Ovary (tissue), 10 donors: ENCODE measurements at regions of chr2 and their contacts with region 1.

Region 1: DNA sequence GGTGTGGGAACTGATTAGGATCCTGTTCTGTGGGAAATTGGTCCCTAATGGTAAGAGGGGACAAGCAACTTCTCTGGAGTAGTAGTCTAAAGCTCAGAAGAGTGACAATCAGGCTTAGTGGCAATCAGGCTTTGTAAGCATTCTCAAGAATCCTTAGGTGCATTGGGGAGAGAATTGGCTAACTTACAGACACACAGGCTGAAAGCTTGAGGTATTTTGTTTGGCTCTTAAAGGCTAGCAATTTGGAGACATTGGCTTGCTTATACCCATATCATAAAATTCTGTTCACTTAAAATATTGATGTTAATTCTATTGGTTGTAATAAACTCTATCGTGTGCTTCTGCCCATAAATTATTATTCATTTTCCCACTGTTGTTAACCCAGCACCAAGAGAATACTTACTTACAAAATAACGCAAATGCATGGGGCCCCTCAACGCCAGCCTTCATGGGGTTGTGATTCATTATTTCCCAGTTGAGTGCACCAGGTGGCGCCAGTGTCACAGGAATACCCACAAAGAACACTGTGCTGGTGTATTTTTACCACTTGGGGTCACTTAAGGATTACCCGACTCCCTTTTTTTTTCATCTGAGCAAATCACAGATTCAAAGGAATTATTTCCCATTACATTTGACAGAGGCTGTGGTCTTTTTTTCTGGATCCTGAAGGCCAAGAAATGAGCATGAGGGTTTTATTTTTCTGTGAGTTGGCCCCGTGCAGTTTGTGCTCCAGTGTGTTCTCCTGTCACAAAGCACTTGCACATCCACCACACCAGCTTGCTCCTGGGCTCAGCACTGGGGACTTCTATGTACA is 45.5 kb downstream of the DDX1 start:
- DNase-seq: peak; percentile 67 to 86 (median 83)
- H3K4me3 ChIP-seq: no peak overlapping the region
- H3K27ac ChIP-seq: no peak overlapping the region
- H3K4me1 ChIP-seq: peaks cover 15% of the 10 kb centered on the region
- H3K27me3 ChIP-seq: no peaks in the 10 kb centered on the region
- CTCF ChIP-seq: peak; percentile 63 to 96 (median 96)
- EP300 ChIP-seq: no peak
- POLR2A ChIP-seq: no peak

Region 2: GRCh38 chr2:15599994-15600393 is 37.2 kb before region 1 on chr2:
- intact Hi-C with region 1: no loop called
- DNase-seq: no peak
- H3K4me3 ChIP-seq: no peak overlapping the region
- H3K27ac ChIP-seq: no peak overlapping the region
- H3K4me1 ChIP-seq: no peaks in the 10 kb centered on the region
- H3K27me3 ChIP-seq: no peaks in the 10 kb centered on the region
- CTCF ChIP-seq: no peak
- EP300 ChIP-seq: no peak
- POLR2A ChIP-seq: no peak

Region 3: DNA sequence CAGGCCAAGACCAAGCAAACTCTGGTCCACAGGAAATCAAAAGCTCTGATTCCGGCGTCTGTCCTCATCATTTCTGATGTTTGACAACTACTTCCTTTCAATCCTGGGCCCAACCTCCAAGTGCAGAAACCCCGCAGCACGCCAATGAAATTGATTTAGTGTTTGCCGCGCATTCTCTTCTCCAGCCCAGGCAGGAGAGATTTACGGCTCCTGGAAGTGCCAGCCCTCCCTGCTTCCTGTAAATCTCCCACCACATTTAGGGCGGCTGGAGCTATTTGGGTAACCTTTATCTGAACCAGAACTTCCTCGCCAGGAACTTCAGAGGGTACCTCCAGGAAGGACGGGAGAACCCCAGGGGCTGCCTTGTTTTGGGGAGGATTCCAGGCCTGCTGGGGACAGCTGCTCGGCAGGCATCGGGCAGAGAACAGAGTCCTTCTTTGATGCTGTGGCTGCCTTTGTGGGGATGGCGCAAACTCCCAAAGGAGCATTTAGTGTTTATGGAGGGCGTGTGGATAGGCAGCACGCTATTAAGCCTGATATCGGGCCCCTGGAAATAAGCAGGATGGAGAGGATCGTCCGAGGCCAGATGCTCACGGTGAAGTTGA is 181.1 kb after region 1 on chr2:
- intact Hi-C with region 1: loop called in 1 of 4 experiments (anchors 10 kb)
- DNase-seq: no peak
- H3K4me3 ChIP-seq: no peak overlapping the region
- H3K27ac ChIP-seq: no peak overlapping the region
- H3K4me1 ChIP-seq: peaks cover 18% of the 10 kb centered on the region
- H3K27me3 ChIP-seq: no peaks in the 10 kb centered on the region
- CTCF ChIP-seq: no peak
- EP300 ChIP-seq: no peak
- POLR2A ChIP-seq: no peak

Region 4: GRCh38 chr2:15939854-15940660 is 302.9 kb after region 1 on chr2 and contains the start of gene MYCN:
- intact Hi-C with region 1: loop called in 2 of 4 experiments (anchors 5 kb)
- DNase-seq: peak; percentile 52 to 72 (median 56)
- H3K4me3 ChIP-seq: peak within 1 kb of the TSS; percentile 44
- H3K27ac ChIP-seq: no peak within 1 kb of the TSS
- H3K4me1 ChIP-seq: no peaks in the 10 kb centered on the region
- H3K27me3 ChIP-seq: no peaks in the 10 kb centered on the region
- CTCF ChIP-seq: peak in 1 of 3 donors; percentile 27
- EP300 ChIP-seq: no peak
- POLR2A ChIP-seq: no peak
- total RNA-seq, gene MYCN: 1.2 to 7.0 (median 2.1) TPM

Region 5: DNA sequence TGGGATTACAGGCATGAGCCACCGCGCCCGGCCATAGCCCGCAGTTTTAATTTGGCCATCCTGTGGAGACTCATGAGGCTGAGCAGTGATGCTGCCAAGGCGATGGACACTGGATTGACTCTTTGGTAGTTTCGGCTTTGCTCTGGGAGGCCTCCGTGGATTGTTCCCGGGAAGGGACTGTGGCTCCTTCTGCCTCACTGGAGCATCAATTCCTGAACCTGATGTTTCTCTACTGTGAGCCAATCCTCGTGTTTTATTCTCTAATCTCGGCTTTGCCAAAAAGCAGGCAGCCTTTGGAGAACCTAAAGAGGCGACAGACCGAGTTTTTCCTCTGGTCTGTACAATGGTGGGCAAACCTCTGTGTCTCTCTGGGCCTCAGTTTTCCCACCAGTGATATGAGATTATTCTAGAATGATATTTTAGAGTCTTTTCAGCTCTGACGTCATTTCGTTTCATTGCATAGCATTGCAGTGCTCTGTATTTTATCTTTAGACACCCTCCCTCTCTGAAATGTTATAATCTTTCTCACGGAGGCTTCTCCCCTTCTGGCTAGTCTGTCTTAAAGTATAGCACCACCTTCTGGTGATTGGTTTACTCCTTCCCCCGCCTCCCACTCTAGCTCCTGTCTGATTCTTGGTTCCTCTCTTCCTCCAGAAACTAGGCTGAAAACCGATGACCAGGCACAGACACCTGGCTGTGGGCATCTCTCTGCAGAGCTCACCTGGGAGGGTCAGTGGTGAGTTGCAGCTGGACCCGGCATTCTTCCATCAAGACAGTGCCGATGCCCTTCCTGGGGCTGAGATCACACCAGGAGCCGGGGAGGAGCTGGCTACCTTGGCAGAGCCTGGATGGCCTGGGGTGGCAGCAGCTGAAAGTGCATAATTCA is 644.5 kb after region 1 on chr2:
- intact Hi-C with region 1: loop called in 1 of 4 experiments (anchors 5 kb)
- DNase-seq: peak in 2 of 5 donors; percentile 13 to 25
- H3K4me3 ChIP-seq: no peak overlapping the region
- H3K27ac ChIP-seq: no peak overlapping the region
- H3K4me1 ChIP-seq: peaks cover 5% of the 10 kb centered on the region
- H3K27me3 ChIP-seq: no peaks in the 10 kb centered on the region
- CTCF ChIP-seq: peak in 1 of 3 donors; percentile 24
- EP300 ChIP-seq: no peak
- POLR2A ChIP-seq: no peak

Region 6: DNA sequence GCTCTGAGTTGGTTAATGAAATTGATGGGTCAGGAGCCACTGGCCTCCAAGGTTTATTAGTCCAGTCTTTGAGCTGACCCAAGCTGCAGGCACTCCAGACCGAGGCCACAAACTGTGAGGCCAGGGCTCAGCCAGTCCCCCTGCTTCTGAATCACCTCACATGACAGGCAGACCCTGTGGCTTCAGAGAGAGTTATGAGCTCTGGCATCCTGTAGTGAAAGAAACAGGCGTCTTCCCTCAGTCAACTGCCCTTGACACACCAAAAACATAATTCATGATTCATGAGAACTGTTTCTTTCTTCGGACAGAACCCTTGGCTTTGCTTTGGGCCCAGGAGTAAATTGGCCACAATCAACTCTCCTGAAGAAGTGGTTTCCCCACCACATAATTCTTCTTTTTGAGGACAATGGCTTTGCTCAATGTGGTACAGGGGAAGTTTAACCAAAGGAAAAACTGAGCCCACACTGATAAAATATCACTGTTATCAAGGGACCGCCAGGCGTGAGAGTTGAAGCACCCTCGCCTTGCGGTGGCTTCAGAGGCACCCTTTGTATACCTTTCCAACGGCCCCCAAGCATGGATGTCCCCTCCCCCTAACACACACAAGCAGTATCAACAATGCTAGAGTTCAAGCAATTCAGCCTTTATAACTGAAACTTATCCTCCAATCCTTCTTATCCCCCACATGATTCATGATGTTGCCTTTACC is 801.6 kb after region 1 on chr2:
- intact Hi-C with region 1: no loop called
- DNase-seq: no peak
- H3K4me3 ChIP-seq: no peak overlapping the region
- H3K27ac ChIP-seq: no peak overlapping the region
- H3K4me1 ChIP-seq: no peaks in the 10 kb centered on the region
- H3K27me3 ChIP-seq: no peaks in the 10 kb centered on the region
- CTCF ChIP-seq: no peak
- EP300 ChIP-seq: no peak
- POLR2A ChIP-seq: no peak

Region 7: DNA sequence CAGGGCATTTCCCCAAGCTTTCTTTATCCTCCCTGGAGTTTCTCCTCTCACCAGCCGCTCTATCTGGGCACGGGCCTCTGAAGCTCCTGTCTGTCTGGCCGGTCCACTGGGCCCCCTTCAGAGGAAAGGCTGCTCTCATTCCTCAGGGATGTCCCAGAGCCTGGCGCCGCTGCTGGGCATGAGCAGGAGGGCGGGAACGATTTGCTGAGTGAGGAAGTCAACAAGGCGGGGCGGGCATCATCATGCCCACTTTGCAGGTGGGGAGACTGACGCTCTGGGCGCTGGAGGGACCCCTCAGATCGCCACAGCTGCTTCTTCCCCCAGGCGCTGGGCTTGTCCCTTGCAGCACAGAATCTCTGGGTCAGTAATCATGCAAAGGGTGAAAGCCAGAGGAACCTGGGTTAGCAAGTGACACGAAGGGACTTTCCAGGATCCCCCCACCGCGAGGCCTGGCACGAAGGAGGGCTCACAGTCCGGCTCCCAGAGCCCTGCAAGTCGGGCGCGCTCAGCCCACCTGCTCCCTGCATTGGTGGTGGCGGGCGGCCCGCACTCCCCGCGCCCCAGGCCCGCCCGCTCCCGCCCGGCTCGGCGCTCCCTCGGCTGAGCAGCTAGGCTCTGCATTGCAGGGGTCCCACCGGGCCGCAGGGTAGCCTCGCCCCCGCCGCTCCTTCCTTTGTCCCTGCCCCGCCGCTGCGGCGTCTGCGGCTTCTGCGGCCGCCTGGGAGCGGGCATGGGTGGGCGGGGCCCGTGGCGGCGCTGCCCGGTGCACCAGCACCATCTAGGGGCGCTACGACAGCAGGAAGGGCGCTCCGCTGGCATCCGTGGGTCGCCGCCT is 870.7 kb after region 1 on chr2:
- intact Hi-C with region 1: loop called in 2 of 4 experiments (anchors 5 to 10 kb)
- DNase-seq: peak; percentile 19 to 67 (median 42)
- H3K4me3 ChIP-seq: no peak overlapping the region
- H3K27ac ChIP-seq: no peak overlapping the region
- H3K4me1 ChIP-seq: no peaks in the 10 kb centered on the region
- H3K27me3 ChIP-seq: no peaks in the 10 kb centered on the region
- CTCF ChIP-seq: peak in 2 of 3 donors; percentile 45 to 49
- EP300 ChIP-seq: no peak
- POLR2A ChIP-seq: no peak

Region 8: DNA sequence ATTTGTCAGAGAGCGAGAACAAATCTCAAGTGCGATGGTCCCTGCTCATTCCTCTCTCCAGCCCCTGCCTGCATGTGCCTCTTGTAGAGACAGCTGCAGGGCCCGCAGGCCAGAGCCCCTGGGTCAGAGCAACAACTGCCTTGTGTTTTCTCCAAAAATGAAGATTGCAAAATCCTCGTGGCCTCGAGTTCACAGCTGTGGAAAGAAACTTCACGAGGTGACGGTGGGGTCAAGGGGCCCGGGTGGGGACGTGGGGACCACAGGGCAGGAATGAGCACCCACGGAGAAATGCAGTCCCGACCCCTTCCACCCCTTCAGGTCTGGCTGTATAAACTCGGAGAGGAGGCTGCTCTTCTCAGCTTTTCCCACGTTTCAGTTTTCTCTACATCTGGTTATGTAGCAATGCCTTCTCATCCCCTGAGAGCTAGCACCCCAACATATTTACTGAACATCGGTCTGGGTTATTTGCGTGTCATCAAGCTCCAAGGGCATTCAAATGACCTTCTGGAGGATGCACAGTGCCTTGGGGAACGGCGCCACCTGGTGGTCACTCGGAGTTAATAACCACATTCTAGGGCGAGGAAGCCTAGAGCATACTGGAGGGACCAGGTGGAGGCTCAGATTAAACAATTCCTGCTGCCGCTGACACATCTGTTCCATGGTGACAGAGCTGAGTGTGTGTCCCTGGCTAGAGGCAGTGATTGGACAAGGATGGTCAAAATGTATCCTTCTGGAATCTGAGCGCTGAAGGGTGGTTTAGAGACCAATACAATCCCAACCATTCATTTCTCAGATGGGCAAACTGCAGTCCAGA is 1119.9 kb after region 1 on chr2:
- intact Hi-C with region 1: loop called in 2 of 4 experiments (anchors 5 to 10 kb)
- DNase-seq: peak; percentile 81 to 91 (median 86)
- H3K4me3 ChIP-seq: no peak overlapping the region
- H3K27ac ChIP-seq: peak overlapping the region in 1 of 2 donors; percentile 76
- H3K4me1 ChIP-seq: peaks cover 14% of the 10 kb centered on the region
- H3K27me3 ChIP-seq: no peaks in the 10 kb centered on the region
- CTCF ChIP-seq: peak; percentile 92 to 93 (median 93)
- EP300 ChIP-seq: no peak
- POLR2A ChIP-seq: no peak